ENCODE measurements at regions of chr1 and their contacts with region 1.

Region 1: DNA sequence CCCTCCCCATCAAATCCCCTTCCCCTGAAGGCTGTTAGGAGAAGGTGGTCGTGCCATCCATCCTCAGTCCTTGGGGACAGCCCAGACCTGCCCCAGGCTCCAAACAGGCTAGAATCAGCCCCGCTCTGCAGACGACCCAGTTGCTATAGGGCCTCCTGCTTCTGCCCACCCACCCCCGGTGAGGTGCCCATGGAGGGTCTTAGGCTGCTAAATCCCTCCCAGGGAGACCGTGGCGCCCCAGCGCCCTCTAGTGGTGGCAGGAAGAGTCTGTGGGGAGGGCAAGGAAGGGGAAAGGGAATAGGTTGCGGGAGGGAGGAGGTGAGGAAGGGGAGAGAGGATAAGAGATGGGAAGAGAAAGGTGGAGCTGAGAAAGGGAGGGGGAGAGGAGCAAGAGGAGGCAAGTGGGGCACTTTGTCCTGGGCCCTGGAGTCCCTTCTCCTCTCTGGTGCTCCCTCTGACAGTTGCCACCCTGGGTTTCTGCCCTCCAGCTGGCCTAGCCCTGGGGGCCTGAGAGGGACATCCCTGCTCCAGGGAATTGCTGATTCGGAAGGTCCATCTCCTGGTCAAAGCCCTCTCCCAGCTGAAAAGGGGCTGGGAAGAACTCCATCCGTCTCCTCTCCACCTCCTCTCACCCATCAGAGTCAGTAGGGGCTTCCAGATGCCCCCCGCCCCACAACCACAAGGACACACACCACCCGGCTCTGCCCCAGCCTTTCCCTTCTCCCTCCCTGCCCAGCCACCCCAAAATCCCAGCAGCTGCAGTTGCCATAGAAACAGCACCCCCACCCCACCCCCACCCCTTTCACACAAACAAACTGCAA is 55.4 kb downstream of the CAMK2N1 start:
- DNase-seq: peak; percentile 73
- ATAC-seq: no peak
- H3K4me3 Mint-ChIP-seq: no peak overlapping the region
- H3K27ac Mint-ChIP-seq: no peak overlapping the region
- H3K4me1 Mint-ChIP-seq: peaks cover 13% of the 10 kb centered on the region
- H3K27me3 Mint-ChIP-seq: peaks cover 36% of the 10 kb centered on the region

Region 2: GRCh38 chr1:20212685-20213331 is 217.8 kb before region 1 on chr1:
- CTCF ChIA-PET with region 1: interaction called, 13 read pairs
- POLR2A ChIA-PET with region 1: no interaction called
- intact Hi-C with region 1: loop called (anchors 1 to 2 kb)
- DNase-seq: peak; percentile 74
- ATAC-seq: peak; percentile 61
- H3K4me3 Mint-ChIP-seq: no peak overlapping the region
- H3K27ac Mint-ChIP-seq: no peak overlapping the region
- H3K4me1 Mint-ChIP-seq: peaks cover 8% of the 10 kb centered on the region
- H3K27me3 Mint-ChIP-seq: peaks cover 46% of the 10 kb centered on the region

Region 3: DNA sequence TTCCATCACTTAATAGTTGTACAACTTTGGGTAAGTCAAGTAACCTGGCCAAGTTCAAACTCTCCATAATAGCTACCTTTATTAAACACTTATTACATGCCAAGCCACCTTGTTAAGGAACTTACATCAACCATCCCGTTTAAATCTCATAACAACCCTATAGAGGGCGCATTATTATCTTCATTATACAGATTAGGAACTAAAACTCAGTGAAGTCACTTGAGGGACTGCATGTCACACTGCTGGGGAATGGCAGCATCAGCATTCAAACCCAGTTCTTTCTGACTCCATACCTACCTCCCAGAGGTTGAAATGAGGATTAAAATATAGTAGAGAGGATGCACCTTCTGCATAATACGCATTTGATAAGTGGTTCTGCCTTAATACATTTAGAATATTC is 197.2 kb before region 1 on chr1:
- CTCF ChIA-PET with region 1: no interaction called
- POLR2A ChIA-PET with region 1: no interaction called
- intact Hi-C with region 1: loop called in 1 of 2 experiments (anchors 5 kb)
- DNase-seq: no peak
- ATAC-seq: peak; percentile 61
- H3K4me3 Mint-ChIP-seq: no peak overlapping the region
- H3K27ac Mint-ChIP-seq: no peak overlapping the region
- H3K4me1 Mint-ChIP-seq: no peaks in the 10 kb centered on the region
- H3K27me3 Mint-ChIP-seq: peaks cover 25% of the 10 kb centered on the region

Region 4: DNA sequence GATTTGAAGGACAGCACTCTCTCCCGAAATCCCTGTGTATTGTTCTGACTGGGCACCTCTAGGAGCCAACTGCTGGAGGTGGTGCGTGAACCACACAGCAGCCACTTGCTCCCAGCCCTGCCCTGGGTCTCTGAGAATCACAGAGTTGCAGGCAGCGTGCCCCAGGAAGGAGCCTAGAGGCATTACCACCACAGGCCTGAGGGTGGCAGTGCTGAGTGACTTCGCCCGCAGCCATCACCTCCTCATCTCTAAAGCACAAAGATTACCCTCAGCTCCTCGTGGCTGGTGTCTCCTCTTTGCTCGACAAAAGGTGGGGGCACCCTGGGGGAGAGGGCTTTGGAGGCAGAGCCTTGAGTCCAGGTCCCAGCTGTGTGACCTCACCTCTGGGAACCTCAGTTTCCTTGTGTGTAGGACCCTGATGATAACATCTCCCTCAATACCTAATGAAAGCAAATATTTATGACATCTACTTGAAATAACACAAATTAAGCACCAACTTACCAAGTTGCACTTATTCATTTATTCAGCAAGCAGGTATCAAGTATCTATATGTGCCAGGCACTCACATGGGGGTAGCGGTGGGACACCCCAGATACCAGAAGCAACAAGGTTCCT is 53.6 kb before region 1 on chr1:
- CTCF ChIA-PET with region 1: interaction called, 4 read pairs
- POLR2A ChIA-PET with region 1: no interaction called
- intact Hi-C with region 1: loop called (anchors 1 to 5 kb)
- DNase-seq: peak; percentile 82
- ATAC-seq: peak; percentile 85
- H3K4me3 Mint-ChIP-seq: no peak overlapping the region
- H3K27ac Mint-ChIP-seq: no peak overlapping the region
- H3K4me1 Mint-ChIP-seq: peaks cover 7% of the 10 kb centered on the region
- H3K27me3 Mint-ChIP-seq: peaks cover 17% of the 10 kb centered on the region